A549 (cell line): ENCODE measurements at regions of chr15 and their contacts with region 1.

Region 1: GRCh38 chr15:64761156-64761555 is 14.2 kb downstream of the RBPMS2 start:
- DNase-seq: no peak
- ATAC-seq: no peak
- H3K4me3 ChIP-seq: no peak overlapping the region
- H3K27ac ChIP-seq: no peak overlapping the region
- H3K4me1 ChIP-seq: no peaks in the 10 kb centered on the region
- CTCF ChIP-seq: no peak
- EP300 ChIP-seq: no peak
- POLR2A ChIP-seq: no peak
- RAD21 ChIP-seq: no peak

Region 2: DNA sequence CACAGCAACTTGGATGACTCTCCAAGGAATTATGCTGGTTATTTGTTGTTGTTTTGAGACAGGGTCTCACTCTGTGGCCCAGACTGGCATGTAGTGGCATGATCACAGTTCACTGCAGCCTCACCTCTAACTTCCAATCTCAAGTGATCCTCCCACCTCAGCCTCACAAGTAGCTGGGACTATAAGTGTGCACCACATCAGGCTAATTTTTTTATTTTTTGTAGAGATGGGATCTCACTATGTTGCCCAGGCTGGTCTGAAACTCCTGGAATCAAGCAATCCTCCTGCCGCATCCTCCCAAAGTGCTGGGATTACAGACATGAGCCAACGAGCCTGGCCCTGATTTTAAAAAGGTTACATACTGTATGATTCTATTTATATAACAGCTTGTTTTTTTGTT is 48.8 kb before region 1 on chr15:
- CTCF ChIA-PET with region 1: no interaction called
- POLR2A ChIA-PET with region 1: interaction called, 11 read pairs
- DNase-seq: no peak
- ATAC-seq: no peak
- H3K4me3 ChIP-seq: no peak overlapping the region
- H3K27ac ChIP-seq: no peak overlapping the region
- H3K4me1 ChIP-seq: 0 out of 3 replicates have a peak, but pooled peaks cover 3% of the 10 kb centered on the region
- CTCF ChIP-seq: no peak
- EP300 ChIP-seq: no peak
- POLR2A ChIP-seq: no peak
- RAD21 ChIP-seq: no peak

Region 3: DNA sequence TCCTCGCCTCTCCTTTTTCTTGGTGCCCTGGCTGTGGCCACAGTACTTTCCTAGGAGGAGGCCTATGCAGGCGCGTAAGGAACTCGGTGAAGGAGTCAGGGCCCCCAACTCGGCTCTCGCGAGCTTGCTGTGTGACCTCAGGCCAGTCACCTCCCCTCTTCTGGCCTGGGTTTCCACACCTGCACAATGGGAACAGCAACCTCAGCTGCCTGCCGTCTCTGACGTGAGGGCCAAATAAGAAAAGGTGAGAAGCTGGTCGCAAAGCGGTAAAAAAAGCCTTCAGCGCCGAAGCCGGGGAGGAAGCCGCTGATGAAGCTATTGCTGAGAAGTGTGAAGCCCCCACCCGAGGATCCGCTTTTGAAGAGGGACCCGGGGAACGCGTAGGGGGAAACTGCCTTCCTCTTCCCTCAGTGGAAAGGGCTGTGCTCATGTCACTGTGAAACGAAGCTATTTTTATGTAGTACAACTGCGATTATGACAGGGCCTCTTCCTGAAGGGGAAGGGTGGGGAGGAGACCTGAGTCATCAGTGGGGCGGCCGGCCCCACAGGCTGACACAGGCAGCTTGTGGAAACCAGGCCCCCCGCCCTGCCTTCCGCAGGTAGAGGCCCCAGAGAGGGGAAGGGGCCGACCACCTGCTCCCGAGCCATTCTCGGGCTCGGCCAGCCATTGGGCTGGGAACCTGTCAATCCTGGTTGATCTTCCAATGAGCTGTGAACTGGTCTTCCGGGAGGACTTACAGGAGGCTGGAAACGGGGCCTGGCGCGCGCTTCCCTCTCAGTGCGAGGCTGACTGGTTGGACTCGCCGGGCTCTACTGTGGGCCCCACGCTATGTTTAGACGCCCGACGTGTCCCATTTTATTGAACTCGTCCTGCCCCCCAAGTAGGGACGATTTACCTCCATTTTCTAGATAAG is 132.6 kb after region 1 on chr15:
- CTCF ChIA-PET with region 1: no interaction called
- POLR2A ChIA-PET with region 1: no interaction called
- DNase-seq: peak in 1 of 2 experiments; percentile 62
- ATAC-seq: peak in 1 of 2 experiments; percentile 31; a peak in 3 of 6 replicates
- H3K4me3 ChIP-seq: no peak overlapping the region
- H3K27ac ChIP-seq: no peak overlapping the region
- H3K4me1 ChIP-seq: peaks cover 10% of the 10 kb centered on the region; the same call in 2 of the 3 replicates
- CTCF ChIP-seq: no peak
- EP300 ChIP-seq: no peak
- POLR2A ChIP-seq: no peak
- RAD21 ChIP-seq: no peak